Caco-2 (cell line): ENCODE measurements at regions of chr3 and their contacts with region 1.

Region 1: DNA sequence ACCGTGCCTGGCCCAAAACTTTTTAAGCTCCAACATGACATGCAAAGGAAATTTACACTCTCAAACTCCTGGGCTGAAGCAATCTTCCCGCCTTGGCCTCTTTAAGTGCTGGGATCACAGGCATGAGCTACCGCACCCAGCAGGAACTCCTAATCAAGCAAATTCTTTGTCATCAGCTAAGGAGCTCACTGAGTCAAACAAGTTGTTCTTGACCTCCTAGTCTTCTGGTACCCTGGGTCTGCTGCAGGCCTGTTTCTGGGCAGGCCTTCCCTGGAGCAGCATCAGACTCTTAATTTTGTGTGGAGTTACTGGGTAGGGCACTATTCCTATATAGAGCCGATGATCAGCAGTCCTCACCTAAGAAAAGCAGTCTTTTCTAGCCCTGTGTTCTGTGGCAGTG is 68.4 kb upstream of the FLNB start:
- DNase-seq: no peak
- H3K4me3 ChIP-seq: no peak overlapping the region
- H3K4me3 Mint-ChIP-seq: no peak overlapping the region
- H3K27ac Mint-ChIP-seq: peak overlapping the region; percentile 73
- H3K4me1 ChIP-seq: peaks cover 15% of the 10 kb centered on the region
- H3K4me1 Mint-ChIP-seq: peaks cover 16% of the 10 kb centered on the region
- H3K27me3 ChIP-seq: no peaks in the 10 kb centered on the region
- H3K27me3 Mint-ChIP-seq: no peaks in the 10 kb centered on the region
- CTCF ChIP-seq: no peak

Region 2: DNA sequence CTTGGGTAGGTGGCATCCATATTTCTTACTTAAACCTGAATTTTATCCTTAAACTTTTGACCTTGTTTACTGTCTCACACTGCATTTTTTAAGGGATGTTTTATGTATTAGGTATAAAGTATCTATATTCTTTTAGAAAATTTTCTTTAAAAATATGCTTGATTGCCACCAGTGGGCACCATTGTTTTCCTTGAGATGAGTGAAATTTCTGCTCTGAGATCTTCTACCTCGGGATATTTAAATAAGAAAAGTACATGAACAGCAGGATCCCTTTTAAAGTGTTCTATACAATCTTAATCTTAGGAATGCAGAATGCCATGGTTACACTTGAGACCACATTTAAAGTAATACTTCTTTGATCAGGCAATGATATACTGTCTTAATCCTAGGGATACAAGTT is 74.9 kb before region 1 on chr3:
- CTCF ChIA-PET with region 1: no interaction called
- POLR2A ChIA-PET with region 1: no interaction called
- intact Hi-C with region 1: no loop called
- DNase-seq: no peak
- H3K4me3 ChIP-seq: no peak overlapping the region
- H3K4me3 Mint-ChIP-seq: no peak overlapping the region
- H3K27ac Mint-ChIP-seq: no peak overlapping the region
- H3K4me1 ChIP-seq: no peaks in the 10 kb centered on the region
- H3K4me1 Mint-ChIP-seq: no peaks in the 10 kb centered on the region
- H3K27me3 ChIP-seq: no peaks in the 10 kb centered on the region
- H3K27me3 Mint-ChIP-seq: no peaks in the 10 kb centered on the region
- CTCF ChIP-seq: peak; percentile 33 to 38

Region 3: GRCh38 chr3:57918123-57918837 is 21.5 kb before region 1 on chr3:
- CTCF ChIA-PET with region 1: no interaction called
- POLR2A ChIA-PET with region 1: interaction called, 10 read pairs
- intact Hi-C with region 1: no loop called
- DNase-seq: no peak
- H3K4me3 ChIP-seq: no peak overlapping the region
- H3K4me3 Mint-ChIP-seq: no peak overlapping the region
- H3K27ac Mint-ChIP-seq: no peak overlapping the region
- H3K4me1 ChIP-seq: no peaks in the 10 kb centered on the region
- H3K4me1 Mint-ChIP-seq: no peaks in the 10 kb centered on the region
- H3K27me3 ChIP-seq: no peaks in the 10 kb centered on the region
- H3K27me3 Mint-ChIP-seq: no peaks in the 10 kb centered on the region
- CTCF ChIP-seq: no peak

Region 4: GRCh38 chr3:58021072-58021959 is 81.5 kb after region 1 on chr3:
- CTCF ChIA-PET with region 1: no interaction called
- POLR2A ChIA-PET with region 1: no interaction called
- intact Hi-C with region 1: no loop called
- DNase-seq: peak; percentile 56 to 71
- H3K4me3 ChIP-seq: no peak overlapping the region
- H3K4me3 Mint-ChIP-seq: no peak overlapping the region
- H3K27ac Mint-ChIP-seq: peak overlapping the region; percentile 79
- H3K4me1 ChIP-seq: peaks cover 64% of the 10 kb centered on the region
- H3K4me1 Mint-ChIP-seq: peaks cover 43% of the 10 kb centered on the region
- H3K27me3 ChIP-seq: no peaks in the 10 kb centered on the region
- H3K27me3 Mint-ChIP-seq: no peaks in the 10 kb centered on the region
- CTCF ChIP-seq: no peak

Region 5: GRCh38 chr3:58349792-58350626 is 410.2 kb after region 1 on chr3:
- CTCF ChIA-PET with region 1: no interaction called
- POLR2A ChIA-PET with region 1: no interaction called
- intact Hi-C with region 1: no loop called
- DNase-seq: peak in 1 of 2 experiments; percentile 24
- H3K4me3 ChIP-seq: no peak overlapping the region
- H3K4me3 Mint-ChIP-seq: no peak overlapping the region
- H3K27ac Mint-ChIP-seq: no peak overlapping the region
- H3K4me1 ChIP-seq: no peaks in the 10 kb centered on the region
- H3K4me1 Mint-ChIP-seq: no peaks in the 10 kb centered on the region
- H3K27me3 ChIP-seq: no peaks in the 10 kb centered on the region
- H3K27me3 Mint-ChIP-seq: no peaks in the 10 kb centered on the region
- CTCF ChIP-seq: no peak